GM10248 (cell line): ENCODE measurements at regions of chr5 and their contacts with region 1.

Region 1: DNA sequence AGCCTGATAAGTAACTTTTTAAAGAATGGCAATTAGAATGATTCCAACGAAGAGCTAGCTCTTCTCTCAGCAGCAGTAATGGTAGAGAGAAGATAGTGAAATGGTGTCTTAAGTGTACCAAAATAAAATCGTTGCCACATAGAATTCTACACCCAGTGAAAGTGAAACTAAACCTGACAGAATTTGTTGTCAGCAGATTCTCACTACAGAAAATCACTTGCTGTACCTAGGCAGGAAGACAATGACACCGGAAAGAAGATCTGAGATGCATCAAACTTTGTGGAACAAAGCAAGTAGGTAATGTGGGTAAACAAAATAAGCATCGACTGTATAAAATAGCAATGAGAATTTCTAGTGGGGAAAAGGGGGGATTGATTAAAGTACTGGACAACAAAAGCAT is 20.7 kb upstream of the EBF1 start:
- DNase-seq: no peak
- CTCF ChIP-seq: no peak

Region 2: DNA sequence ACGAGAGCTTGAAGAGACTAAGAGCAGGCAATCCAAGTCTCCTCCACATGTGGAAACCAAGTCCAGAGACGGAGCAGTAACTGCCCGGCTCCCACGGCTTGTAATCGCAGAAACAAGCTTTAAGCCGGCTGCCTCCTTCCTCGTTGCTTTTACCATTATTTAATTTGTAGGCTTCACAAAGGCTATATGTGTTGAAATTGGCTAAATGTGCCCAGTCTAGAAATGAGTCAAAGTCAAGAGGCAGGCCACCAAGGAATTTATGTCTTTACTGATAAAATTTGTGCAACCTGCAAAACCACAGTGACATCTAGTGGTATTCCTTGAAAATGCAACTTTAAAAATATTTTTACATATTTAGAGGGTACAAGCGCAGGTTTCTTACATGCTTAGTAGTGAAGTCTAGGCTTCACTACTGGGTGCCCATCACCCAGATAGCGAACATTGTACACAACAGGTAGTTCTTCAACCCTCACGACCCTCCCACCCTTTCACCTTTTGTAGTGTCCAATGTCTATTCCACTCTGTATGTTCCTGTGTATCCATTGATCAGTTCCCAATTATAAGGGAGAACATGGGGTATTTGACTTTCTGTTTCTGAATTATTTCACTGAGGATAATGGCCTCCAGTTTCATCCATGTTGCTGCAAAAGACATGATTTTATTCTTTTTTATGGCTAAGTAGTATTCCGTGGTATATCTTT is 12.7 kb after region 1 on chr5:
- CTCF ChIA-PET with region 1: interaction called, 13 read pairs
- POLR2A ChIA-PET with region 1: no interaction called
- DNase-seq: peak; percentile 41
- CTCF ChIP-seq: peak; percentile 60

Region 3: GRCh38 chr5:159616952-159617351 is 496.5 kb after region 1 on chr5:
- CTCF ChIA-PET with region 1: no interaction called
- POLR2A ChIA-PET with region 1: no interaction called
- DNase-seq: no peak
- CTCF ChIP-seq: no peak